ENCODE measurements at regions of chr2 and their contacts with region 1.

Region 1: GRCh38 chr2:223860809-223861738 is 23.7 kb upstream of the AP1S3 start:
- DNase-seq: no peak
- ATAC-seq: peak; percentile 41; the same call in 2 of the 3 replicates
- H3K4me3 ChIP-seq: no peak overlapping the region
- H3K27ac ChIP-seq: no peak overlapping the region
- H3K4me1 ChIP-seq: peaks cover 9% of the 10 kb centered on the region
- H3K27me3 ChIP-seq: no peaks in the 10 kb centered on the region
- CTCF ChIP-seq: 0 out of 6 replicates have a peak, but pooled peaks of 1 of the 3 experiments have one; percentile 7
- EP300 ChIP-seq: no peak
- POLR2A ChIP-seq: no peak
- RAD21 ChIP-seq: no peak

Region 2: GRCh38 chr2:223779877-223780276 is 81.2 kb before region 1 on chr2:
- CTCF ChIA-PET with region 1: interaction called, 7 read pairs
- POLR2A ChIA-PET with region 1: no interaction called
- RAD21 ChIA-PET with region 1: interaction called, 9 read pairs
- SMC1A ChIA-PET with region 1: interaction called, 3 read pairs
- in situ Hi-C with region 1: no loop called
- intact Hi-C with region 1: loop called (anchors 1 kb)
- DNase-seq: no peak
- ATAC-seq: peak; percentile 91
- H3K4me3 ChIP-seq: no peak overlapping the region
- H3K27ac ChIP-seq: no peak overlapping the region
- H3K4me1 ChIP-seq: no peaks in the 10 kb centered on the region
- H3K27me3 ChIP-seq: no peaks in the 10 kb centered on the region
- CTCF ChIP-seq: peak; percentile 37 to 45 (median 42); a peak in 5 of 6 replicates
- EP300 ChIP-seq: no peak
- POLR2A ChIP-seq: no peak
- RAD21 ChIP-seq: peak; percentile 69

Measured in GM12878 (cell line).